ENCODE measurements at regions of chr7 and their contacts with region 1.

Region 1: DNA sequence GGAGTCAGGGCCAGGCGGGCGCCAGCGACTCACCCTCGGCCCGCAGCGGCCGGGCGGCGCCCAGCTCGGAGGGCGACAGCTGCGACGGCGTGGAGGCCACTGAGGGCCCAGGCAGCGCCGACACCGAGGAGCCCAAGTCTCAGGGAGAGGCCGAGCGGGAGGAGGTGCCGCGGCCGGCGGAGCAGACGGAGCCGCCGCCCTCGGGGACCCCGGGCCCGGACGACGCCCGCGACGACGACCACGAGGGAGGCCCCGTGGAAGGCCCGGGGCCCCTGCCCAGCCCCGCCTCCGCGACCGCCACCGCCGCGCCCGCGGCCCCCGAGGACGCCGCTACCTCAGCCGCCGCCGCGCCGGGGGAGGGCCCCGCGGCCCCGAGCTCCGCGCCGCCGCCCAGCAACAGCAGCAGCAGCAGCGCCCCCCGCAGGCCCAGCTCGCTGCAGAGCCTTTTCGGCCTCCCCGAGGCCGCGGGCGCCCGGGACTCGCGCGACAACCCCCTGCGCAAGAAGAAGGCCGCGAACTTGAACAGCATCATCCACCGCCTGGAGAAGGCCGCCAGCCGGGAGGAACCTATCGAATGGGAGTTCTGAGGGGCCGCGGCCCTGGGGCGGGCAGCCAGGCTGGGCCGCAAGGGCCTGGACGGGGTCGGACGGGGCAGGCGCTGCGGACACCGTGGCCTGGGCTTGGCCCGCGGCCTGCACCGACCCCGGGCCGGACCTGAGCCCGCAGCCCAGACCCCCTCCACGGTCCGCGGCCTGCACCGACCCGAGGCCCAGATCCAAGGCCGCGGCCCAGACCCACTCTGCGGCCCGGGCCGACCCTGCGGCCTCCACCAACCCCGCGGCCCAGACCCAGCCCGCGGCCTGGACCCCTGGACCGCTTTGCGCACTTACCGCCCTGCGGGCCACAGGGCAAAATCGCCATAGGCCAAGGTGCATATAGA is 37.9 kb upstream of the SH2B2 start:
- DNase-seq: peak in 1 of 6 donors; percentile 62
- ATAC-seq: no peak
- H3K4me3 ChIP-seq: no peak overlapping the region
- H3K27ac ChIP-seq: no peak overlapping the region
- H3K4me1 ChIP-seq: peaks cover 6 to 10% (median 9%) of the 10 kb centered on the region in 3 donors
- H3K27me3 ChIP-seq: no peaks in the 10 kb centered on the region
- CTCF ChIP-seq: no peak

Region 2: GRCh38 chr7:101678658-101679057 is 570.1 kb before region 1 on chr7:
- intact Hi-C with region 1: loop called in 1 of 3 experiments (anchors 10 kb)
- DNase-seq: no peak
- ATAC-seq: no peak
- H3K4me3 ChIP-seq: no peak overlapping the region
- H3K27ac ChIP-seq: no peak overlapping the region
- H3K4me1 ChIP-seq: no peaks in the 10 kb centered on the region
- H3K27me3 ChIP-seq: no peaks in the 10 kb centered on the region
- CTCF ChIP-seq: no peak

Measured in pancreas (tissue), 10 donors.